Activated CD4-positive, alpha-beta T cell treated with anti-CD3 and anti-CD28 coated beads, Interleukin-2, amount 10 ng/mL, durations not matched to agents 24 days and 14 days (primary cell): ENCODE measurements at regions of chrX and their contacts with region 1.

Region 1: GRCh38 chrX:15854712-15855567 is at the start of gene AP1S2:
- DNase-seq: peak; percentile 98
- H3K4me3 Mint-ChIP-seq: peak within 1 kb of the TSS; percentile 91
- H3K27ac Mint-ChIP-seq: peak within 1 kb of the TSS; percentile 97
- H3K4me1 Mint-ChIP-seq: peaks cover 18% of the 10 kb centered on the region
- H3K27me3 Mint-ChIP-seq: peaks cover 3% of the 10 kb centered on the region
- total RNA-seq, gene AP1S2: 24.2 and 28.8 TPM in 2 replicates

Region 2: GRCh38 chrX:15737960-15738902 is 116.7 kb before region 1 on chrX and contains the start of gene CA5B:
- intact Hi-C with region 1: loop called (anchors 1 kb)
- DNase-seq: peak; percentile 99
- H3K4me3 Mint-ChIP-seq: peak within 1 kb of the TSS; percentile 90
- H3K27ac Mint-ChIP-seq: peak within 1 kb of the TSS; percentile 76
- H3K4me1 Mint-ChIP-seq: peaks cover 21% of the 10 kb centered on the region
- H3K27me3 Mint-ChIP-seq: no peaks in the 10 kb centered on the region
- total RNA-seq, gene CA5B: 4.7 and 5.9 TPM in 2 replicates

Region 3: DNA sequence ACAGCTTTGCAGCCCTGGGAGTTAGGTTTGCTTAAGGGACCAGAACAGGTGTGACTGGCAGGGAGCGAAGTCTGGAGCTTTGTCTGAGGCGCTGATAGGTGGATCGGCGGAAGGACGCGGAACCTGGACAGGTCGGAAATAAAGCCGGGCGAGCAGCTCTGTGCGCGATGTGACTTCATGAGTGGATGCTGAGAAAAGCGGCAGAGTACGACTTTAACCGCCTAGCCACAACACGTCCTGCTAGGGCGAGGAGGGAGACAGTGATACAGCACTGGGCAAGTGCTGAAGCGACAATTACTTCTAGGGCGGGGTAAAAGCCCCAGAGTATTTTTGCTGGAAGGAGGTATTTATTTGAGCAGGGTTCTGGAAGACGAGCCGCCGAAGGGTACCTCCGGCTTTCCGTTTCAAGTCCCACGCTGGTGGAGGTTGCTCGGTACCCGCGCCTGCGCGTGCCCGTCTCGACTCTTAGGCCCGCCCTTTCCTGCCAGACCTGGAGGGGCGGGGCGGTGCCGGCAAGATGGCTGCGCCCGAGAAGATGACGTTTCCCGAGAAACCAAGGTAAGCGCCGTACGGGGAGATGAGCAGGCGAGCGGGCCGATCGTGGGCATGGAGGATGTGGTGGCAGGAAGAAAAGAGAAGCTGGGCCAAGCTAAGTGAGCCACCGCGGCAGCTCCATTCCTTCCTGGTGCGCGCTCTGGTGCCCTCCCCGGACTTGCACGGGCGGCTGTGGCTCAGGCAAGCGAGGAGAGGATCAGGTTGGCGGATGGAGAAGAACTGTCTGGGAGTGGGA is 64.8 kb before region 1 on chrX and contains the start of gene ZRSR2:
- intact Hi-C with region 1: loop called (anchors 1 kb)
- DNase-seq: peak; percentile 96
- H3K4me3 Mint-ChIP-seq: no peak within 1 kb of the TSS
- H3K27ac Mint-ChIP-seq: no peak within 1 kb of the TSS
- H3K4me1 Mint-ChIP-seq: peaks cover 9% of the 10 kb centered on the region
- H3K27me3 Mint-ChIP-seq: no peaks in the 10 kb centered on the region
- total RNA-seq, gene ZRSR2: 20.0 and 20.3 TPM in 2 replicates

Region 4: DNA sequence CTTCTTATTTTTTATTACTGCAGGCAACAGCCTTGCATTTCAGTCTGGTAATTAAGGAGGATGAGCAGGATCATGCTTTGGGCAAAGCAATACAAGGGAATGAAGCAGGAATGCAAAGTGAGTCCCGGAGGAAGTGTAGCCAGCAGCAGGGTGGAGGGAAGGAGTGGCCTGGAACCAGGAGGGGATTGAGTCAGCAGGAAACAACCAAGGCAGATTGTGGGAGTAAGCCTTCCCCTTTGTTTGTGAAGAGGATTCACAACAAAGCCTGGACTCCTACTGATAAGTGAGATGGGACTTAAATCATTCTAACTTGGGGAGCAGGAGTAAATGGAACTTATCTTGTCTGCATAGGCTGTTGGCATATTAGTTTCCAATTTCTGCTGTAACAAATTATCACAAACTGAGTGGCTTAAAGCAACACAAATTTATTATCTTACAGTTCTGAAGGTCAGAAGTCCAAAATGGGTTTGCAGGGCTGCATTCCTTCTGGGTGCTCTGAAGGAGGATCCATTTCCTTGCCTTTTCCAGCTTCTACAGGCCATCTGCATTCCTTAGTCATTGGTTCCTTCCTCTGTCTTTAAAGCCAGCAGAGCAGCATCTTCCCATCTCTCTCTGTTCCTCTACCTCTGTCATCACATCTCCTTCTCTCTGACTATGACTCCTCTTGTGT is 92.8 kb after region 1 on chrX:
- intact Hi-C with region 1: no loop called
- DNase-seq: no peak
- H3K4me3 Mint-ChIP-seq: no peak overlapping the region
- H3K27ac Mint-ChIP-seq: no peak overlapping the region
- H3K4me1 Mint-ChIP-seq: no peaks in the 10 kb centered on the region
- H3K27me3 Mint-ChIP-seq: no peaks in the 10 kb centered on the region

Region 5: DNA sequence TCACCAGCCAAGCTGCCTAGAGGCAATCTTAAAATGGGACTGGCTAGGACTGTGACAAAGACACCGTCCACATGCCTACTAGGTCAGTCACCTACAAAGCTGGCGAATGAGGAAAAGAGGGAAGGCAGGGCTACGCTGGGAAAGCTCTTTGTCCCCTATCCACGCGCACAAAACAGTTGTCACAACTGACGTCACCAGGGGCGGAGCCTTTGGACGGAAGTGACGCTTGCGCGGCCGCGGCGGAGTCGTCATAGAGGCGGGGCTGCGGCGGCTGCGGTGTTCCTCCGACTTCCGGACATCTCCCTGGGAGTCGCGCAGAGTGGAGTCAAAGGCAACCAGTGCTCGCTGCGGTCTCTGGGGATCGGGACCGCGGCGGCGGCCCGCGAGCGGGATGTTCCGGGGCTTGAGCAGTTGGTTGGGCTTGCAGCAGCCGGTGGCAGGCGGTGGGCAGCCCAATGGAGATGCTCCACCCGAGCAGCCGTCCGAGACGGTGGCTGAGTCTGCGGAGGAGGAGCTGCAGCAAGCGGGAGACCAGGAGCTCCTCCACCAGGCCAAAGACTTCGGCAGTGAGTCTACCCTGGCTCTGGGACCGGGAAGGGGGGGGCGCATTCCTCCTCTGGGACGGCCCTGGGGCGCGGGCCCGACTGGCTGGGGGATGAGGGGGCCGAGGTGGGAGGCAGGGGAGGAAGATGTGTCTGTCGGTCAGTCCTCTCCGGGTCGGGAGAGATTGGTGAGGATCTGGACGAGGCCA is 864.6 kb after region 1 on chrX and contains the start of gene SYAP1:
- intact Hi-C with region 1: loop called (anchors 10 kb)
- DNase-seq: peak; percentile 98
- H3K4me3 Mint-ChIP-seq: peak within 1 kb of the TSS; percentile 94
- H3K27ac Mint-ChIP-seq: peak within 1 kb of the TSS; percentile 94
- H3K4me1 Mint-ChIP-seq: peaks cover 21% of the 10 kb centered on the region
- H3K27me3 Mint-ChIP-seq: no peaks in the 10 kb centered on the region
- total RNA-seq, gene SYAP1: 19.6 and 20.1 TPM in 2 replicates